ENCODE measurements at regions of chr9 and their contacts with region 1.

Region 1: DNA sequence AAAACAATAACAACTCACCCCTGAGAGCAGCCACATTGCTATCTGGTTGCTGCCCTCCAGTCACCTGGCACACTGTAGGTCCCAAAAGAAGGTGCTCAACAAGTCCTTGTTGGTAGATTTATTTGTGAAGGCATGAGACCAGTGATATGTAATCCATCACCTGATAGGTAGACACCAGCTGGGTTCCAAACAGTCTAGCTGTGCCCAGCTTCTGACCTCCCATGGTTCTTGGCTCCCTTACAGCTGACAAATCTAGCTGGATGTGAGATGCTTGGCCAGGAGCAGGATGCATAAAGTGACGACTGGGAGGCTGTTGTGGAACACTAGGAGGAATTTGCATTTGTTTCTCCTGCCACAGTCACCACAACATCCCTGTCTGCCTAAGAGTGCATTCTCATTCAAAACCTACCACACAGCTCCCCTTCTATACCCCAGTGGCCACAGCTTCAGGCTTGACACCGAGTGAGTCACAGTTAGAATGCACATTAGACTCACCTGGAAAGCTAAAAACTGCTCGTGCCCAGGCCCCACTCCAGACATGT is 7.8 kb upstream of the VLDLR start:
- DNase-seq: peak in 4 of 5 donors; percentile 34 to 63 (median 40)
- ATAC-seq: peak; percentile 90 to 96 (median 94)
- H3K4me3 ChIP-seq: no peak overlapping the region
- H3K27ac ChIP-seq: peak overlapping the region in 11 of 12 donors; percentile 12 to 76 (median 58)
- H3K4me1 ChIP-seq: peaks cover 0 to 19% (median 6%) of the 10 kb centered on the region in 12 donors
- H3K27me3 ChIP-seq: no peaks in the 10 kb centered on the region
- CTCF ChIP-seq: no peak
- POLR2A ChIP-seq: no peak

Region 2: DNA sequence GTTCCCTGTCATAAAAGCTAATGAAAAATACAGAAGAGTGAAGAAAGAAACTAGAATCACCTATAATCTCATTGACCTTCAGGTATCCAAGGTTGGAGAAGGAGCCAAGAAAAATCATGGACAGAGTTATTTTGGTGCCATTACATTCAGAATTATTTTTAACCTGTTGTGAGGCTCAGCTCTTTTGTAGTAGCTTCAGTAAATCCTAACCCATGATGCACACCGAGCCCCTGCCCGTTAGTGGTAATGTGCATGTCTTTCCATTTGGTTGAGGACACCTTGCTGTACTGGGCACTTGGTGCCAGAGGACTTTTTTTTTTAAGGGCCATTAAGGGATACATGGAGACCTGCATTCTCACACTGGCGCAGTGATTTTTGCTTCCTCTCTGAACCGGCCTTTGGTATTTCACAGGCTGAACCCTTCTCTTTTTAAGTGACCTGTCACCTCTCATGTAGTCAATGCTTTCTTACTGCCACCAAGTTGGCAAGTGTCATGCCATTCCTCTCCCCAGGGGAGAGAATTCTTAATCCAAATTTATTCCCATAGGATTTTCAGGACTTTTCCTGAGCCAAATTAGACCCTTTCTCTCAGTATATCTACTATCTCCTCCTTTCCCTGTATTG is 473.1 kb before region 1 on chr9:
- intact Hi-C with region 1: loop called in 1 of 10 experiments (anchors 10 kb)
- DNase-seq: no peak
- ATAC-seq: peak; percentile 60 to 74 (median 66)
- H3K4me3 ChIP-seq: no peak overlapping the region
- H3K27ac ChIP-seq: peak overlapping the region; percentile 18 to 69 (median 60)
- H3K4me1 ChIP-seq: peaks cover 0 to 38% (median 17%) of the 10 kb centered on the region in 12 donors
- H3K27me3 ChIP-seq: no peaks in the 10 kb centered on the region
- CTCF ChIP-seq: no peak
- POLR2A ChIP-seq: no peak

Region 3: DNA sequence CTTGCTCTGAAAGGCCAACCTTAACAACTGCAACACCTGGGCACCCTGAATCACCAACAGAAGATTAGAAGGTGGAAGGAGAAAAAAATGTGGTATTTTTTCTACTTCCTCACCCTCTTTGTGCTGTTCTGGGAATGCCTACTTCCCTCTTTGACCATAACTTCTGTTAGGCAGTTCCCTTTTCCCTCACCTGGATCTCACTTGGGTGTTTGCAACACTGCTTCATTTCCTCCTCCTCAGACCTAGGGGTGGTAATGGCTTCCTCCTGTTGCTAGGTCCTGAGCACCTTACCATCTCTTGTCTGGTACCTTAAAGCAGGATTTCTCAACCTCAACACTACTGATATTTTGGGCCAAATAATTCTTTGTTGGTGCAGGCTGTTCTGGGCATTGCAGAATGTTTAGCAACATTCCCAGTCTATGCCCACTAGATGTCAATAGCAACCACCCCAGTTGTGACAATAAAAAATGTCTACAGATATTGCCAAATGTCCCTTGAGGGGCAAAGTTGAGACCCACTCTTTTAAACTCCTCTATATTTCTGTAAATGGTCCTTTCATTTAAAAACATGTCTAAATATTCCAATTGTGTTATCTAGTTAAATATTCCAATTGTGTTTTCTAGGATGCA is 292.2 kb before region 1 on chr9:
- intact Hi-C with region 1: loop called in 1 of 10 experiments (anchors 10 kb)
- DNase-seq: no peak
- ATAC-seq: peak in 1 of 4 donors; percentile 34
- H3K4me3 ChIP-seq: no peak overlapping the region
- H3K27ac ChIP-seq: no peak overlapping the region
- H3K4me1 ChIP-seq: no peaks in the 10 kb centered on the region
- H3K27me3 ChIP-seq: no peaks in the 10 kb centered on the region
- CTCF ChIP-seq: peak in 9 of 12 donors; percentile 12 to 44 (median 34)
- POLR2A ChIP-seq: no peak

Region 4: GRCh38 chr9:2559212-2560152 is 54.3 kb before region 1 on chr9:
- intact Hi-C with region 1: loop called in 1 of 10 experiments (anchors 5 kb)
- DNase-seq: peak; percentile 80 to 95 (median 89)
- ATAC-seq: peak; percentile 98 to 99 (median 99)
- H3K4me3 ChIP-seq: peak overlapping the region in 1 of 12 donors; percentile 15
- H3K27ac ChIP-seq: peak overlapping the region; percentile 73 to 91 (median 84)
- H3K4me1 ChIP-seq: peaks cover 3 to 33% (median 22%) of the 10 kb centered on the region in 12 donors
- H3K27me3 ChIP-seq: no peaks in the 10 kb centered on the region
- CTCF ChIP-seq: peak in 1 of 12 donors; percentile 7
- POLR2A ChIP-seq: peak in 1 of 2 donors; percentile 16

Region 5: DNA sequence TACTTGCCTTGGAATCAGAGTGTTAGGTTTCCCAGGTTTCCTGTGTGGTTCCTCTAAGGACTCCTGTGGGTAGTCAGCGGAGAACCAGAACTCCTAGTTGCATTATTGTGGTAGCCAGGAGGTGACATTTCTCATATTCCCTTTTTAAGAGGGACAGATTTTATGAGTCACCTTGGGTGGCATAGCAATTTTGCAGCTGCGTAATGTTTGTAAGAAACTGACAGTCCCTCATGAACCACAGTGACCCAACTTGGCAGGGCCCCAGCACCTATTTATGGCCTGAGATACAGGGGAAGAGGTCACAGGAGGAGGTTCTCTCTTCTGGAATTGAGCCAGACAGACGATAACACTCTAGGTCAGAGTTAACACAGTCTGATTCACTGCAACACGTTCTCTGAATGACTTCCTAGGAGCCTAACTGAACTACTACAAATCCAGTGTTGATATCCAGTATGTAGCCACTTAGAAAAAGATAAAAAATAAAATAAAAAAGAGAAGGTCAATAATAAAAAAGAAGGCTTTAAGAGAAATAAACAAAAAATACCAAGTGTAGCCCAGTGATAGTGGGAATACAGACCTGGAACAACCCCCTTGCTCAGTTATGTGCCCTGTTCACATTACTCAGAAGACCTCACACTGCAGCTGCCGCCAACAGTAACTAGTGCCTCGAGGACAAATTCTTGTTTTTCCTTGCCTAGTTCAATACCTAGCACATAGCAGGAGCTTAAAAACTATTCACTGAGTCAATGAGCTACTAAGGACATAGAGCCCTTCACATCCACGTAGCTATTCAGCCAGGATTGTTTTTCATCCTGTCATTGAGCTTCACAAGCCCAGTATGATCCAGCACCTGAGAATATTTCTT is 43.0 kb before region 1 on chr9:
- intact Hi-C with region 1: loop called in 1 of 10 experiments (anchors 5 kb)
- DNase-seq: peak; percentile 91 to 97 (median 93)
- ATAC-seq: peak; percentile 92 to 97 (median 94)
- H3K4me3 ChIP-seq: peak overlapping the region in 3 of 12 donors; percentile 9 to 25 (median 10)
- H3K27ac ChIP-seq: peak overlapping the region; percentile 49 to 89 (median 80)
- H3K4me1 ChIP-seq: peaks cover 5 to 67% (median 28%) of the 10 kb centered on the region in 12 donors
- H3K27me3 ChIP-seq: no peaks in the 10 kb centered on the region
- CTCF ChIP-seq: peak in 5 of 12 donors; percentile 7 to 31 (median 13)
- POLR2A ChIP-seq: no peak

Measured in heart left ventricle (tissue), 16 donors.